OCI-LY7 (cell line): ENCODE measurements at regions of chr15 and their contacts with region 1.

Region 1: DNA sequence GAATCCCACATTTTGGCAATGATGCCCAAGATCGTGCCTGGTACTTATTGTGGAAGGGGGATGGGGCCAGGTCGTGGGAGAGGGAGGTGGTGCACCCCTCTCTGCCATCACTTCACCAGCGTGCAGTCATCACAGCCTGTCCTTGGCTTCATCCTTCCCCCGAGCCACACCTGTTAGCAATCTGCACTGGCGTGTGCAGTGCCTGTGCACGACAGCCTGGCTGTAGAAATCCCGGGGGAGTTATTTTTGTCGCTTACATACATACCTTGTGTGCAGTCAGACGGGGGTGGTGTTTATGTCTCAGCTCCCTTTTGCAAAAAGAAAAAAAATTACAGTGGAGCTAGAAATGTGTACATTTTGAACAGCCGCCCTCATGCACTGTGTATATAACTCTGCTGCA is 216.0 kb downstream of the TLE3 start:
- DNase-seq: peak; percentile 99
- H3K4me3 ChIP-seq: peak overlapping the region; percentile 62
- H3K27ac ChIP-seq: peak overlapping the region; percentile 91
- H3K4me1 ChIP-seq: peaks cover 59% of the 10 kb centered on the region
- CTCF ChIP-seq: no peak; the same call in 1 of the 2 replicates

Region 2: GRCh38 chr15:69755551-69756310 is 126.0 kb before region 1 on chr15:
- CTCF ChIA-PET with region 1: no interaction called
- POLR2A ChIA-PET with region 1: no interaction called
- intact Hi-C with region 1: loop called (anchors 5 kb)
- DNase-seq: peak; percentile 62
- H3K4me3 ChIP-seq: peak overlapping the region; percentile 14
- H3K27ac ChIP-seq: peak overlapping the region; percentile 40
- H3K4me1 ChIP-seq: peaks cover 54% of the 10 kb centered on the region
- CTCF ChIP-seq: no peak

Region 3: DNA sequence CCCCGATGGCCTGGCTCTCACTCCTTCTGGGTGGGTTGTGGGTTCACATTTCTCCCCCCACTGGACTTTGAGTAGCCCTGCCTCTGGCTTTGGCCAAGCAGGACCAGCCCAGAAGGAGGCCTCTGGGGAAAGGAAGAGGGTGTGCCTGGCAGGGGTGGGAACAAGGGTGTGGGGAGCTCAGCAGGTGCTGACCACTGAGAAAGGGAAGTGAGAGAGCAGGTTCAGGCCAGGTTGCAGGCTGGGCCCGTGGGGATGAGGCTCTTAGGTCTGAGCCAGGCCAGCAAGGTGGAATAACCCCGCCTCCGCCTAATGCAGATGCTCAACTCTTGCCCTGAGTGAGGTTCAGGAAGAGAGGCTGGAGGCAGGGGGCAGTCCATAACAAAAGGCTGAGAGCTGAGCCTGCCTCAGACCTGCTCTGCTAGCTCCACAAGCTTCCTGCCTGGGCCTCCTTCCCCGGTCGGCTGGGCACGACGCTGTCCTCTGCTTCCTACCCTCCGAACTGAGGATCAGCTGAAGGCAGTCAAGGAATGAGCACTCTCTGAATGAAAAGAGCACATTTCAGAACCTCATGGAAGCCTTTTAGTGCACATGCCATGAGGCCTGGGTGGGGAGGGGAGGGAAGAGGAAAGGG is 133.2 kb after region 1 on chr15:
- CTCF ChIA-PET with region 1: no interaction called
- POLR2A ChIA-PET with region 1: interaction called, 4 read pairs
- intact Hi-C with region 1: loop called (anchors 2 kb)
- DNase-seq: peak; percentile 93
- H3K4me3 ChIP-seq: peak overlapping the region; percentile 28
- H3K27ac ChIP-seq: peak overlapping the region; percentile 81
- H3K4me1 ChIP-seq: peaks cover 83% of the 10 kb centered on the region
- CTCF ChIP-seq: no peak; the same call in 1 of the 2 replicates